Activated CD4-positive, alpha-beta T cell treated with anti-CD3 and anti-CD28 coated beads for 36 hours (primary cell): ENCODE measurements at regions of chr18 and their contacts with region 1.

Region 1: DNA sequence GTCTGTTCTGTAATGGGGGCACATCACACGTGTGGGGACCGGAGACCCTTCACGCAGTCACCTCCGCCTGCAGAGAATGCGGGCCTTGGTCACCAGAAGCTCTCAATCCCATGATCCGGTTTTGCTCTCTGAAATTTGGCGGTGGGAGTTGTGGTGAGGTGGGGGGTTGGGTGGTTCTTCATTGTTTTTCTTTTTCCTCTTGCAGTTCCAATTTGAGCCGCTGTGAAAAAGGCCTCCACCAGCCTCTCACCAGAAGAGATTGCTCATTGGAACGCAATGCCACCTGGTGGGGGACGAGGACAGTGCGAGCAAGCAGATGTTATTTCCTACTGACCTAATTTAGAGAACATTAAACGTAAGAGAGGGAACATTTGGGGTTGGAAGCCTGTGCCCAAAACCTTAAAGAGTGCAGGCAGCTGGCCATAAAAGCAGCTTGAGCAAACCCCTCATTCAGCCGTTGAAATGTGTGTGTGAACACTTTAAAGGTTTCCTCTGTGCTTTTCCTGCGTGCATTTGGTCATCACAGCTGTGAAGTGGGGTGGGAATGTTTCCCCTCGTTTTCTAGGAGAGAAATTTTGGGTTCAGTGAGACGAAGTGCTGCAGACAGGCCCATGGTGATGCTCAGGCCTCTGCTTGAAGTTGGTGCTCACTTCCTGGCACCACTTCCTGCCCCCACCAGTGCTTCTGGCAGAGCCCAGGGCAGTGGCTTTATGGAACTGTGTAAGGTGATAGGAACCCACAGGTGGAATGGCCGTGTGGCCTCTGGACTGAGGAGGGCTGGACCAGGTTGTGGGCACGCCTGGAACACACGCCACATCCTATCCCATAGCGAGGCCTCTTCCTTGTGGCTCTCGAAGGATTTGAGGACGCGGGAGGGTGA is 61.7 kb downstream of the ZCCHC2 start:
- DNase-seq: peak; percentile 93
- ATAC-seq: peak; percentile 71
- H3K4me3 Mint-ChIP-seq: peak overlapping the region; percentile 1
- H3K27ac Mint-ChIP-seq: peak overlapping the region; percentile 91
- H3K4me1 Mint-ChIP-seq: peaks cover 39% of the 10 kb centered on the region
- H3K27me3 Mint-ChIP-seq: no peaks in the 10 kb centered on the region

Region 2: DNA sequence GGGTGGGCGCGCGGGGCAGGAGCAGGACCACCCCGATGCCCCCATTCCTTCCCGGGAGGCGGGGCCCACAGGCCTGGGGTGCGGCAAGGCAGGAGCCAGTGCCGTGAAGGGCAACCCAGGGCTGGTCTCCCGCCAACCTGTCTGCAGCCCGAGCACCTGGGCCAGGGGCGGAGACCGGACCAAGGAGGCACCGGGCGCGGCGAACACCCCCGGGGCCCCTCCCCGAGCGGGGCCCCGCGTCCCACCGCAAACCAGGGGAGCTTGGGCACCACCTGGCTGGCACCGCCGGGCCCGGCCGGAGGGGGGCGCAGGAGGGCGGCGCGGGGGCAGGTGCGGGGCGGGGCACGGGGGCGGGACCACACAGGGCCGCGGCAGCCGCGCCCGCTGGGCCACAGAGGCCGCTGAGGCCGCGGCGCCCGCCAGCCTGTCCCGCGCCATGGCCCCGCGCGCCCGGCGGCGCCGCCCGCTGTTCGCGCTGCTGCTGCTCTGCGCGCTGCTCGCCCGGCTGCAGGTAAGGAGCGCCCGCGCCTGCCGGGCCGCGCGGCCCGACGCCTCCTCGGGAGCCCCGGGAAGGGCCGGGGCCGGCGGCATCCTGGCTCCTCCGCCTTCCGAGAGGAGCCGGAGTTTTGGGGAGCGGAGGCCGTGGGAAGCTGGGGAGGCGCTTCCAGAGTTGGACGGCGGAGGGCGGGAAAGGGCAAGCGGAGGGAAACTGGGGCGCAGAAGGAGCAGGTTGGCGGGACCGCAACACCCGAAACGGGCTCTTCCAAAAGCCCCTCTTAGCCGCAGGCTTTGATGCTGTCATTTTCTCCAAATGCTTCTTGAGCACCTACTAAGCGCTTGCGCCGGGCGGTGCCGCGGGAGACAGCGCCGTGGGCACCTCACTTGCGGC is 259.3 kb before region 1 on chr18 and contains the start of gene TNFRSF11A:
- CTCF ChIA-PET with region 1: no interaction called
- POLR2A ChIA-PET with region 1: no interaction called
- intact Hi-C with region 1: loop called (anchors 2 to 5 kb)
- DNase-seq: peak; percentile 85
- ATAC-seq: peak; percentile 77
- H3K4me3 Mint-ChIP-seq: peak within 1 kb of the TSS; percentile 78
- H3K27ac Mint-ChIP-seq: peak within 1 kb of the TSS; percentile 64
- H3K4me1 Mint-ChIP-seq: peaks cover 29% of the 10 kb centered on the region
- H3K27me3 Mint-ChIP-seq: peaks cover 70% of the 10 kb centered on the region
- total RNA-seq, gene TNFRSF11A: 6.9 to 9.3 TPM

Region 3: DNA sequence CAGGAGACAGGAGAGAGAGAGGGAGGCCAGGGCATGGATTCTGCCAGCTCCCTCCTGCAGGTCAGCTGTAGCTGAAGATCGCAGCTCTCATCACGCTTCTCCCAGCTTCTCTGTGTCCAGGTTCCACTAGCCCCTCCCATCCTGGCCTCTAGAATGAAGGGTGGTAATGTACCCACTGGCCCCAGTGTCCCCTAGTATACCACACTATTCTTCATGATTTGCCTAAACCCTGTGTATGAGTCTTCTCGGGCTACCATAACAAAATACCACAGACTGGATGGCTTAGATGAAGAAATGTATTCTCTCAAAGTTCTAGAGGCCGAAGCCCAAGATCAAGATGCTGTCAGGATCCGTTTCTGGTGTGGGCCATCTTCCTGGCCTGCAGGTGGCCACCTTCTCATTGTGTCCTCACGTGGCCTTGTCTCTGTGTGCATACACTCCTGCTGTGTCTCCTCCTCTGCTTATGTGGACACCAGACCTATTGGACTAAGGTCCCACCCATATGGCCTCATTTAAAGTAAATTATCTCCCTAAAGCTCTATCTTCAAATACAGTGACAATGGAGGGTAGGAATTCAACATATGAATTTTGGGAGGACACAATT is 182.0 kb before region 1 on chr18:
- CTCF ChIA-PET with region 1: no interaction called
- POLR2A ChIA-PET with region 1: no interaction called
- intact Hi-C with region 1: no loop called
- DNase-seq: no peak
- ATAC-seq: no peak
- H3K4me3 Mint-ChIP-seq: no peak overlapping the region
- H3K27ac Mint-ChIP-seq: no peak overlapping the region
- H3K4me1 Mint-ChIP-seq: peaks cover 17% of the 10 kb centered on the region
- H3K27me3 Mint-ChIP-seq: peaks cover 4% of the 10 kb centered on the region

Region 4: GRCh38 chr18:62505669-62506494 is 78.6 kb before region 1 on chr18:
- CTCF ChIA-PET with region 1: interaction called, 4 read pairs
- POLR2A ChIA-PET with region 1: no interaction called
- intact Hi-C with region 1: loop called in 1 of 2 experiments (anchors 1 kb)
- DNase-seq: peak; percentile 66
- ATAC-seq: peak; percentile 99
- H3K4me3 Mint-ChIP-seq: peak overlapping the region; percentile 60
- H3K27ac Mint-ChIP-seq: peak overlapping the region; percentile 98
- H3K4me1 Mint-ChIP-seq: peaks cover 26% of the 10 kb centered on the region
- H3K27me3 Mint-ChIP-seq: no peaks in the 10 kb centered on the region

Region 5: GRCh38 chr18:62555135-62555534 is 29.3 kb before region 1 on chr18:
- CTCF ChIA-PET with region 1: interaction called, 3 read pairs
- POLR2A ChIA-PET with region 1: no interaction called
- intact Hi-C with region 1: loop called in 1 of 2 experiments (anchors 1 kb)
- DNase-seq: no peak
- ATAC-seq: peak; percentile 87
- H3K4me3 Mint-ChIP-seq: no peak overlapping the region
- H3K27ac Mint-ChIP-seq: no peak overlapping the region
- H3K4me1 Mint-ChIP-seq: peaks cover 29% of the 10 kb centered on the region
- H3K27me3 Mint-ChIP-seq: no peaks in the 10 kb centered on the region

Region 6: GRCh38 chr18:62784966-62785413 is 200.5 kb after region 1 on chr18:
- CTCF ChIA-PET with region 1: no interaction called
- POLR2A ChIA-PET with region 1: no interaction called
- intact Hi-C with region 1: loop called in 1 of 2 experiments (anchors 5 kb)
- DNase-seq: no peak
- ATAC-seq: peak; percentile 42
- H3K4me3 Mint-ChIP-seq: no peak overlapping the region
- H3K27ac Mint-ChIP-seq: no peak overlapping the region
- H3K4me1 Mint-ChIP-seq: peaks cover 55% of the 10 kb centered on the region
- H3K27me3 Mint-ChIP-seq: peaks cover 3% of the 10 kb centered on the region

Region 7: GRCh38 chr18:62957885-62958472 is 373.5 kb after region 1 on chr18:
- CTCF ChIA-PET with region 1: interaction called, 5 read pairs
- POLR2A ChIA-PET with region 1: no interaction called
- intact Hi-C with region 1: loop called (anchors 1 to 5 kb)
- DNase-seq: peak; percentile 74
- ATAC-seq: peak; percentile 84
- H3K4me3 Mint-ChIP-seq: no peak overlapping the region
- H3K27ac Mint-ChIP-seq: no peak overlapping the region
- H3K4me1 Mint-ChIP-seq: peaks cover 9% of the 10 kb centered on the region
- H3K27me3 Mint-ChIP-seq: no peaks in the 10 kb centered on the region

Region 8: GRCh38 chr18:62982600-62983251 is 398.2 kb after region 1 on chr18:
- CTCF ChIA-PET with region 1: interaction called, 10 read pairs
- POLR2A ChIA-PET with region 1: no interaction called
- intact Hi-C with region 1: loop called (anchors 1 to 5 kb)
- DNase-seq: peak; percentile 74
- ATAC-seq: peak; percentile 72
- H3K4me3 Mint-ChIP-seq: no peak overlapping the region
- H3K27ac Mint-ChIP-seq: no peak overlapping the region
- H3K4me1 Mint-ChIP-seq: peaks cover 3% of the 10 kb centered on the region
- H3K27me3 Mint-ChIP-seq: no peaks in the 10 kb centered on the region